ENCODE measurements at regions of chr17 and their contacts with region 1.

Region 1: GRCh38 chr17:82022981-82023374 is at the start of gene LRRC45:
- DNase-seq: peak; percentile 97 to 100 (median 100)
- ATAC-seq: peak; percentile 97
- H3K4me3 ChIP-seq: peak within 1 kb of the TSS; percentile 71
- H3K4me3 Mint-ChIP-seq: peak within 1 kb of the TSS; percentile 80 to 91 (median 84)
- H3K27ac ChIP-seq: peak within 1 kb of the TSS; percentile 65
- H3K27ac Mint-ChIP-seq: peak within 1 kb of the TSS in 7 of 9 donors; percentile 41 to 88 (median 66)
- H3K4me1 ChIP-seq: peaks cover 16 to 29% of the 10 kb centered on the region in 2 donors
- H3K4me1 Mint-ChIP-seq: peaks cover 7 to 28% (median 22%) of the 10 kb centered on the region in 7 donors
- H3K27me3 ChIP-seq: no peaks in the 10 kb centered on the region
- H3K27me3 Mint-ChIP-seq: no peaks in the 10 kb centered on the region
- total RNA-seq, gene LRRC45: 9.2 to 39.1 (median 15.0) TPM

Region 2: GRCh38 chr17:81890447-81891299 is 132.3 kb before region 1 on chr17:
- CTCF ChIA-PET with region 1: no interaction called
- POLR2A ChIA-PET with region 1: interaction called, 3 read pairs
- intact Hi-C with region 1: loop called in 1 of 2 experiments (anchors 1 kb)
- DNase-seq: peak in 1 of 9 donors; percentile 47
- ATAC-seq: no peak
- H3K4me3 ChIP-seq: peak overlapping the region; percentile 79
- H3K4me3 Mint-ChIP-seq: peak overlapping the region; percentile 78 to 96 (median 87)
- H3K27ac ChIP-seq: peak overlapping the region; percentile 82
- H3K27ac Mint-ChIP-seq: peak overlapping the region; percentile 84 to 97 (median 95)
- H3K4me1 ChIP-seq: peaks cover 16 to 20% of the 10 kb centered on the region in 2 donors
- H3K4me1 Mint-ChIP-seq: peaks cover 0 to 32% (median 19%) of the 10 kb centered on the region in 7 donors
- H3K27me3 ChIP-seq: no peaks in the 10 kb centered on the region
- H3K27me3 Mint-ChIP-seq: no peaks in the 10 kb centered on the region

Region 3: GRCh38 chr17:81959362-81960129 is 63.4 kb before region 1 on chr17:
- CTCF ChIA-PET with region 1: interaction called, 122 read pairs
- POLR2A ChIA-PET with region 1: interaction called, 29 read pairs
- intact Hi-C with region 1: loop called (anchors 1 kb)
- DNase-seq: peak; percentile 73 to 94 (median 84)
- ATAC-seq: peak; percentile 97
- H3K4me3 ChIP-seq: no peak overlapping the region
- H3K4me3 Mint-ChIP-seq: peak overlapping the region in 7 of 10 donors; percentile 43 to 82 (median 57)
- H3K27ac ChIP-seq: no peak overlapping the region
- H3K27ac Mint-ChIP-seq: no peak overlapping the region
- H3K4me1 ChIP-seq: peaks cover 0 to 10% of the 10 kb centered on the region in 2 donors
- H3K4me1 Mint-ChIP-seq: peaks cover 0 to 8% (median 2%) of the 10 kb centered on the region in 7 donors
- H3K27me3 ChIP-seq: peaks cover 8% of the 10 kb centered on the region in 2 donors
- H3K27me3 Mint-ChIP-seq: peaks cover 0 to 41% (median 12%) of the 10 kb centered on the region in 5 donors

Region 4: GRCh38 chr17:82037113-82037888 is 14.3 kb after region 1 on chr17 and contains the start of gene DCXR:
- CTCF ChIA-PET with region 1: interaction called, 7 read pairs
- POLR2A ChIA-PET with region 1: interaction called, 10 read pairs
- intact Hi-C with region 1: loop called (anchors 1 kb)
- DNase-seq: peak; percentile 87 to 97 (median 93)
- ATAC-seq: peak; percentile 96
- H3K4me3 ChIP-seq: peak within 1 kb of the TSS; percentile 71
- H3K4me3 Mint-ChIP-seq: peak within 1 kb of the TSS; percentile 82 to 94 (median 89)
- H3K27ac ChIP-seq: peak within 1 kb of the TSS; percentile 75
- H3K27ac Mint-ChIP-seq: peak within 1 kb of the TSS; percentile 61 to 94 (median 90)
- H3K4me1 ChIP-seq: peaks cover 7% of the 10 kb centered on the region in 2 donors
- H3K4me1 Mint-ChIP-seq: peaks cover 14 to 29% (median 24%) of the 10 kb centered on the region in 7 donors
- H3K27me3 ChIP-seq: no peaks in the 10 kb centered on the region
- H3K27me3 Mint-ChIP-seq: no peaks in the 10 kb centered on the region
- total RNA-seq, gene DCXR: 63.0 to 130 (median 83.6) TPM

Region 5: GRCh38 chr17:82098072-82098821 is 75.3 kb after region 1 on chr17 and contains the start of gene FASN:
- CTCF ChIA-PET with region 1: no interaction called
- POLR2A ChIA-PET with region 1: interaction called, 5 read pairs
- intact Hi-C with region 1: loop called in 1 of 2 experiments (anchors 1 kb)
- DNase-seq: peak; percentile 84 to 93 (median 90)
- ATAC-seq: peak; percentile 87
- H3K4me3 ChIP-seq: peak within 1 kb of the TSS; percentile 61
- H3K4me3 Mint-ChIP-seq: peak within 1 kb of the TSS in 9 of 10 donors; percentile 36 to 84 (median 69)
- H3K27ac ChIP-seq: peak within 1 kb of the TSS; percentile 97
- H3K27ac Mint-ChIP-seq: peak within 1 kb of the TSS in 4 of 9 donors; percentile 63 to 80 (median 72)
- H3K4me1 ChIP-seq: peaks cover 4 to 12% of the 10 kb centered on the region in 2 donors
- H3K4me1 Mint-ChIP-seq: peaks cover 0 to 14% (median 7%) of the 10 kb centered on the region in 7 donors
- H3K27me3 ChIP-seq: no peaks in the 10 kb centered on the region
- H3K27me3 Mint-ChIP-seq: no peaks in the 10 kb centered on the region
- total RNA-seq, gene FASN: 24.3 to 168 (median 59.0) TPM

Region 6: DNA sequence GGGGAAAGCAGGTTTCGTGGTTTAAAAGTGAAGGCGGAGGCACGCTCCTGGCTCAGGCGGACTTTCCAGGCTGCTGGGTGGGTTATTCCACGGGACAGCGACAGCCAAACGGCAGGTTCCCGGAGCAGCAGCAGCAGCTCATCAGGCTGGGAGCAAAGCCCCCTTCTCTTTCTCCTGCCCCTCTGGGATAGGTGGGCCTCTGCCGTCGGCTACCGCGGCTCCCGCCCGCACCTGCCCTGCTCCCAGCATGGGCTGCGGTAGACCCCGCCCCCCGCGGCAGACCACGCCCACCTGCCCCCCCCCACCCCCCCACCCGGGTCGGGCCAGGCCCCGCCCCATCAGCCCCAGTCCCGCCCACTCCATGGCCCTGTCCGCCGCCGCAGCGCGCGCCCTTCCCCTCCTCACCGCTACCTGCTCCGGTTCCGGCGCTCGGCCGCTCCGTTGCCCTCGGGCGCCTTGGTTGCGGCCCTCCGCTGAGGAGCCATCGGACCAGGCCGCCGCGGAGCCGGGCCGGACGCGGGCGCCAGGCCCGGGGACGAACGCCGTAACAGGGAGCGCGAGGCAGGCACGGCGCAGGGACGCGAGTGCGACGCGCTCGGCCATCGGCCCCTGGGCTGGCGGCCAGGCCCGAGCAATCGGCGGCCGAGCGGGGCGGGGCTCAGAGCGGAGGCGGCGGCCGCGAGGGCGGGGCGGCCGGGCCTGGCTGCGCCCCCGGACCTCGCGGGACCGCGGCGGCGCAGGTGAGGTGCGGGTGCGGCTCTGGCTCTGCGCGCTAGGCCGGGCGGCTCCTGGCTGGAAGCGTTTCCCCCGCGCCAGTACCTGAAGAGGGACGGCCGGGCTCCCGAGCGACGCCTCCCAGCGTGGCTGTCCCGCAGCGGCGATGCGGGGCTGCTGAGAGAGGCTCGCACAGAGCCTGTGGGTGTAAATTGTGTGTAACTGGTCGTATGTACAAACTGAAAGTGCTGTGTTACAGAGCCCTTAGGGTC is 395.3 kb after region 1 on chr17 and contains the starts of genes HEXD and OGFOD3:
- CTCF ChIA-PET with region 1: no interaction called
- POLR2A ChIA-PET with region 1: no interaction called
- intact Hi-C with region 1: loop called (anchors 1 to 5 kb)
- DNase-seq: peak; percentile 78 to 96 (median 92)
- ATAC-seq: peak; percentile 94
- H3K4me3 ChIP-seq: peak within 1 kb of the TSS; percentile 89
- H3K4me3 Mint-ChIP-seq: peak within 1 kb of the TSS; percentile 78 to 89 (median 84)
- H3K27ac ChIP-seq: peak within 1 kb of the TSS; percentile 94
- H3K27ac Mint-ChIP-seq: peak within 1 kb of the TSS; percentile 80 to 92 (median 86)
- H3K4me1 ChIP-seq: peaks cover 5 to 20% of the 10 kb centered on the region in 2 donors
- H3K4me1 Mint-ChIP-seq: peaks cover 23 to 42% (median 31%) of the 10 kb centered on the region in 7 donors
- H3K27me3 ChIP-seq: no peaks in the 10 kb centered on the region
- H3K27me3 Mint-ChIP-seq: no peaks in the 10 kb centered on the region
- total RNA-seq, gene HEXD: 62.7 to 153 (median 66.9) TPM
- total RNA-seq, gene OGFOD3: 21.9 to 34.6 (median 32.3) TPM

Measured in naive thymus-derived CD4-positive, alpha-beta T cell (primary cell).